ENCODE measurements at regions of chr10 and their contacts with region 1.

Region 1: GRCh38 chr10:113126229-113127201 is 176.5 kb downstream of the TCF7L2 start:
- H3K4me3 Mint-ChIP-seq: peak overlapping the region; percentile 35
- H3K27ac Mint-ChIP-seq: no peak overlapping the region
- H3K4me1 Mint-ChIP-seq: peaks cover 12% of the 10 kb centered on the region
- H3K27me3 Mint-ChIP-seq: peaks cover 72% of the 10 kb centered on the region

Region 2: GRCh38 chr10:112565434-112566053 is 561.0 kb before region 1 on chr10:
- intact Hi-C with region 1: loop called (anchors 5 kb)
- H3K4me3 Mint-ChIP-seq: no peak overlapping the region
- H3K27ac Mint-ChIP-seq: no peak overlapping the region
- H3K4me1 Mint-ChIP-seq: no peaks in the 10 kb centered on the region
- H3K27me3 Mint-ChIP-seq: no peaks in the 10 kb centered on the region

Region 3: GRCh38 chr10:112721080-112721698 is 405.3 kb before region 1 on chr10:
- intact Hi-C with region 1: loop called (anchors 5 kb)
- H3K4me3 Mint-ChIP-seq: no peak overlapping the region
- H3K27ac Mint-ChIP-seq: no peak overlapping the region
- H3K4me1 Mint-ChIP-seq: no peaks in the 10 kb centered on the region
- H3K27me3 Mint-ChIP-seq: no peaks in the 10 kb centered on the region

Measured in dendritic cell treated with granulocyte-macrophage colony-stimulating factor and Interleukin-4, amounts not matched to agents 40 ng/mL and 50 ng/mL, for 4 days (primary cell).